Astrocyte of the cerebellum (primary cell): ENCODE measurements at regions of chr5 and their contacts with region 1.

Region 1: DNA sequence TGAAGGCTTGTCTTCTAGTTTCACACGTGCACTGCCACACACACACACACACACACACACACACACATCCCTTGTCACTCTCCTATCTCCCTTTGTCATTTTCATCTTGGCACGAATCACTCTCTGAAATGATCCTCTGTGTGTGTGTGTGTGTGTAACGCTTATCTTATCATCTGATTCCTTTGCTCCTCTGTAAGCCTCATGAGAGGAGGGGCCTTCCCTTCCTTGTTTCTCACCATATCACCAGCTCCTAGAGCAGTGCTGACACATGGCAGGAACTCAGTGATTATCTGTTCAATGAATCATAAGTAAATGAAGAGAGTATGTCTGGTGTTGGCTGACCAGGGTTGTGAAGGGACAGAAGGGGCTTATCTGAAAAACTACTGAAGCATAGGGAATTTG is 53.3 kb downstream of the PDE4D start:
- DNase-seq: no peak
- H3K4me3 ChIP-seq: no peak overlapping the region
- CTCF ChIP-seq: no peak

Region 2: DNA sequence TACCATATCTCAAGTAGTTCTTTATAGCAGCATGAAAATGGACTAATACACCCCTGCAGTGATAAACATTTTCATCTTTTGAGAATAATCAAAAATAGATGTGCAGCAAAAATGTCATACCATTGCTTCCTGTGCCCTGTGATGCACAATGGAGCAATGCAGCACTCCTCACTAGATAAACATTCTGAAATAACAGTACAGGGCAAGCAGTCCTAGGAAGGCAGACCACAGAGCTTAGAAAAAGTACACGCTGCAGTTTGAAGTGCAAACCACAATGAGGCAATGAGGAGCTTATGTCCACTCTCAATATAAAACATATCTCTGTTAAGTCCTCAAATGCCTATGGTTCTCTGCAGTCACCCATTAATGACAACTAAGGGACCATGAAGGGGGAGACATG is 314.2 kb before region 1 on chr5:
- in situ Hi-C with region 1: no loop called
- DNase-seq: peak; percentile 74
- H3K4me3 ChIP-seq: no peak overlapping the region
- CTCF ChIP-seq: peak; percentile 28

Region 3: GRCh38 chr5:59562756-59563389 is 277.3 kb before region 1 on chr5:
- in situ Hi-C with region 1: no loop called
- DNase-seq: no peak
- H3K4me3 ChIP-seq: no peak overlapping the region
- CTCF ChIP-seq: no peak

Region 4: GRCh38 chr5:59874675-59875074 is 34.5 kb after region 1 on chr5:
- in situ Hi-C with region 1: loop called (anchors 5 kb)
- DNase-seq: no peak
- H3K4me3 ChIP-seq: no peak overlapping the region
- CTCF ChIP-seq: no peak

Region 5: DNA sequence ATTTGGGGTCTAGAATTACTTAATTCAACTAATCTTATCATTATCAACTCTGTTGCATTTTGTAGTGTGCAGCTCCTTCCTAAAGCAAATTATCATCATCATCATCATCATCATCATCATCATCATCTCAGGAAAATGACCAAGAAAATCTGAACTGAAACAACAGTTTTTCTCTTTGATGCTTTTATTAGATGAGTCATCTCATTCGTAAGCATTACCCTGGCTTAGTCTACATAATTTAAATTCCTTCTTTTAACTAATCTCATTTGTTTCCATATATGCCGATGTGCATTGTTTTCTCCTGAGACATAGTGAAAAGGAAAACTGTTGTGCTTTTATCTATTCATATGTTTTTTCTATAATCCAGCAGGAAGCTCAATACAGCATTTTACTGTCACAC is 226.3 kb after region 1 on chr5:
- in situ Hi-C with region 1: no loop called
- DNase-seq: peak; percentile 6
- H3K4me3 ChIP-seq: no peak overlapping the region
- CTCF ChIP-seq: no peak